ENCODE measurements at regions of chr2 and their contacts with region 1.

Region 1: GRCh38 chr2:64914735-64915509 is 74.3 kb upstream of the SLC1A4 start:
- DNase-seq: no peak

Region 2: GRCh38 chr2:64504774-64505720 is 409.9 kb before region 1 on chr2:
- intact Hi-C with region 1: no loop called
- DNase-seq: no peak

Region 3: GRCh38 chr2:64957109-64957903 is 42.4 kb after region 1 on chr2:
- intact Hi-C with region 1: no loop called
- DNase-seq: no peak

Region 4: GRCh38 chr2:64985447-64985846 is 70.5 kb after region 1 on chr2:
- intact Hi-C with region 1: loop called in 1 of 2 experiments (anchors 2 kb)
- DNase-seq: no peak

Region 5: GRCh38 chr2:65031341-65032018 is 116.6 kb after region 1 on chr2:
- intact Hi-C with region 1: loop called in 1 of 2 experiments (anchors 5 kb)
- DNase-seq: no peak

Region 6: DNA sequence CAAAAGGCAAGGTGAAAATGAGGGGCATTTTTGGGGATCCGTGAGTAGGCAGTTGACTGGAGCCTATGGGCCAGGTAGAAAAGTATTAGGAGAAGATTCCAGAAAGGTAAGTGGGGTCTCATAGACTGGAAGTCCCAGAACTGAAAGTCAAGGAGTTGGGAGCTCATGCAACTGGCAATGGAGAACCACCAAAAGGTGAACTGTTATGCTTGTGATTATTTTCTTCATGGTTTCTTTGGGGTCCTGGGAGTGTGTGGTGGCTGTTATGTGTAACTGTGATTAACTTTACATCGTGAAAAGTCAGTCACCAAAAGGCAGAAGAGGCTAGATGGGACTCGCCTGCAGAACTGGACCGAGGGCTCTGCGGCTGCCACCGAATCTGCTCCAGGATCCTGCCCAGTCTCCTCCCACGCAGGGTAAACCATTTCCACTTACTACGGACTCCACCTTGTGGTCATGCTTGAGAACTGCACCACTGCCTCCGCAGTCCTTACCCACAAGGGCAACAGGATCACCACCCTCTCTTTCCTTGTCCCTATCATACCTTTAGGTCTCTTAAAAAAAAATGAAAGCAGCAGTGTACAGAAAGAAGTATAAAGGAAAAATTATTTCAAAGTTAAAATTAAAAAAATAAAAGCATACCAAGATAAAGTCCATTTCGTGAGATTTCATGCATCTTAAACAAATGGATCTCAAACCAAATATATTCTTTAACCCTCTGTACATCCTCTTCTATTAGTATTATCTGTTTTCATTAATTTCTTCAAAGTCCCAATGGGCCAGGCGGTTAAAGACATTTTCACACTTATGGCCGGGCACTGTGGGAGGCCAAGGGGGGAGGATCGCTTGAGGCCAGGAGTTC is 125.7 kb after region 1 on chr2:
- intact Hi-C with region 1: loop called in 1 of 2 experiments (anchors 2 kb)
- DNase-seq: peak; percentile 94

Region 7: GRCh38 chr2:65186872-65187851 is 272.2 kb after region 1 on chr2:
- intact Hi-C with region 1: loop called in 1 of 2 experiments (anchors 10 kb)
- DNase-seq: peak; percentile 90